Gastrocnemius medialis (tissue), 4 donors: ENCODE measurements at regions of chr9 and their contacts with region 1.

Region 1: DNA sequence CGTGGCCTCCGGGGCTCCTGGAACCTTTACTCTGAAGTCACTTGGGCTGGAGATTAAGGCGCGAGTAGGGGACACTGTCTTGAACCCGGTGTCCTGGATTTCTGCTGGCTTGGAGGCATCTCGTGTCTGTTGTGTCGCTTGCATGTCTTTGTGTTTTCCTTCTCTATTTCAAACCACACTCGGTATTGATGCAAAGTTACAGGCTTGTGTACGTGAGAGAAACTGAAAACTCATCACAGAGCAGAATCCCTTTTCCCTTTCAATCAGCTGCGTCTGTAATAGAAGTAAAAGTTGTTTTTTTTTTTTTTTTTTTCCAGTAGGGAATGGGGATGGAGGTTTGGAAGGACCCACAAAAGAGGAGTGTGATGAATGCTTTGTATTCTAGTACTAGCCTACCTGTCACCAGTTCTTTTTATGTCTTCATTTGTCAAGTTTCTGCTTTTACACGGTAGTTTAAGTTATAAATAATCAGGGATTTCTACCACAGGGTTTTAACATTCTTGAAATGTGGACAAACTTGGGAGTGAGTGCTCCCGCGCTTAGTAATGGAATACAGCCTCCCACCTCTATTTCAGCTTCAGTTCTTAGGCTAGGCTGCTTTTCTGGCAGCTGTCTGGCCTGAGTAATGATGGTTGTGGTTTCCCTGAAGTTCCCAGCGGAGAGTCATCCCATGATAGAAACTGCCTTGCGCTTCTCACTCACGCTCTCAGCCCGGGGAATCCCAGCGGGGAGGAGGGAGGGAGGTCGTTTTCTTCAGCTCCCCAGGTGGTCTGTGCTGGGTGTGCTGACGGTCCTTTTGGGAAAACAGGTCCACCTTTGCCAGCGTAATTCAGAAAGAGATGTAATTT is 763 bp downstream of the TJP2 start:
- DNase-seq: peak; percentile 41 to 55
- ATAC-seq: peak; percentile 58 to 83
- H3K4me3 ChIP-seq: peak overlapping the region; percentile 70 to 89 (median 85)
- H3K27ac ChIP-seq: peak overlapping the region; percentile 83 to 93 (median 85)
- H3K4me1 ChIP-seq: peaks cover 5 to 10% of the 10 kb centered on the region in 2 donors
- H3K27me3 ChIP-seq: no peaks in the 10 kb centered on the region
- CTCF ChIP-seq: no peak
- POLR2A ChIP-seq: peak; percentile 18 to 54

Region 2: DNA sequence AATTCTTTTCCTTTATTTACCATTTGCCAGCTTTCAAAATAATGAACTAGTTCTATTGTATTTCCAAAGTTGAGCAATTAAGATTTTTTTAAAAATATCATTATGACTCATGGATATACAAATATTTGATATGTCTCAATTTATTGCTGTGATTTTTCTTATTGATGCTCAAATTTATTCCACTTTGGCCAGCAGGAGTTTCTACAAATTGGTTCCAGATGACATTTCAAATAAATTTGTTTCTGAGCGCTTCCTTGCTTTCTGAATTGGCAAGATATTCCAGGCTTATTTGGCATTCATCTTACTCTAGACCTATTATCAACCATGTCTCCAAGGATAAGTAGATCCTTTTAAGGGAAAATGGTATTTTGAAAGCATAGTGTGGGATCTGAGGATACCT is 59.2 kb before region 1 on chr9:
- in situ Hi-C with region 1: loop called in 1 of 4 experiments (anchors 10 kb)
- intact Hi-C with region 1: no loop called
- DNase-seq: no peak
- ATAC-seq: no peak
- H3K4me3 ChIP-seq: no peak overlapping the region
- H3K27ac ChIP-seq: no peak overlapping the region
- H3K4me1 ChIP-seq: peaks cover 0 to 3% of the 10 kb centered on the region in 2 donors
- H3K27me3 ChIP-seq: no peaks in the 10 kb centered on the region
- CTCF ChIP-seq: no peak
- POLR2A ChIP-seq: no peak